Caki2 (cell line): ENCODE measurements at regions of chr1 and their contacts with region 1.

Region 1: GRCh38 chr1:145845514-145846161 is at the start of gene NUDT17:
- DNase-seq: peak; percentile 69
- total RNA-seq, gene NUDT17: 5.1 and 9.9 TPM in 2 replicates

Region 2: DNA sequence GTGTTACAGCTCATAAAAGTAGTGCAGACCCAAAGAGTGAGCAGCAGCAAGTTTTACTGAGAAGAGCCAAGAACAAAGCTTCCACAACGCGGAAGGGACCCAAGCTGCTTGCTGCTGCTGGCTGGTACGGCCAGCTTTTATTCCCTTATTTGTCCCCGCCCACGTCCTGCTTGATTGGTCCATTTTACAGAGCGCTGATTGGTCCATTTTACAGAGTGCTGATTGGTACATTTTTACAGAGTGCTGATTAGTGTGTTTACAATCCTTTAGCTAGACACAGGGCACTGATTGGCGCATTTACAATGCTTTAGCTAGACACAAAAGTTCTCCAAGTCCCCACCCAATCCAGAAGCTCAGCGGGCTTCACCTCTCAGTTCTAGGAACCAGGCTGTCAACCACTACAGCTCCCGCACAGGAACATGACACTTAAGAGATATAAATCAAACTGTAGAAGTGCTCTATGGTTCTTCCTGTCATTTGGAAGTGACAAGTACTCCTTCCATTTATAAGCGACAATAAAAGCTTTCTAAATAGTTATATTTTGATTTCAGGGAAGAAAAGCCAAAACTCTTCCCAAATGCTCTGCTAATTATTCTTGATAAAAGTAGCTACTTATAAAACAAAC is 50.3 kb before region 1 on chr1:
- in situ Hi-C with region 1: loop called (anchors 10 kb)
- DNase-seq: no peak

Region 3: GRCh38 chr1:146049436-146049835 is 203.8 kb after region 1 on chr1:
- in situ Hi-C with region 1: no loop called
- DNase-seq: no peak